AG04449 (cell line): ENCODE measurements at regions of chr1 and their contacts with region 1.

Region 1: DNA sequence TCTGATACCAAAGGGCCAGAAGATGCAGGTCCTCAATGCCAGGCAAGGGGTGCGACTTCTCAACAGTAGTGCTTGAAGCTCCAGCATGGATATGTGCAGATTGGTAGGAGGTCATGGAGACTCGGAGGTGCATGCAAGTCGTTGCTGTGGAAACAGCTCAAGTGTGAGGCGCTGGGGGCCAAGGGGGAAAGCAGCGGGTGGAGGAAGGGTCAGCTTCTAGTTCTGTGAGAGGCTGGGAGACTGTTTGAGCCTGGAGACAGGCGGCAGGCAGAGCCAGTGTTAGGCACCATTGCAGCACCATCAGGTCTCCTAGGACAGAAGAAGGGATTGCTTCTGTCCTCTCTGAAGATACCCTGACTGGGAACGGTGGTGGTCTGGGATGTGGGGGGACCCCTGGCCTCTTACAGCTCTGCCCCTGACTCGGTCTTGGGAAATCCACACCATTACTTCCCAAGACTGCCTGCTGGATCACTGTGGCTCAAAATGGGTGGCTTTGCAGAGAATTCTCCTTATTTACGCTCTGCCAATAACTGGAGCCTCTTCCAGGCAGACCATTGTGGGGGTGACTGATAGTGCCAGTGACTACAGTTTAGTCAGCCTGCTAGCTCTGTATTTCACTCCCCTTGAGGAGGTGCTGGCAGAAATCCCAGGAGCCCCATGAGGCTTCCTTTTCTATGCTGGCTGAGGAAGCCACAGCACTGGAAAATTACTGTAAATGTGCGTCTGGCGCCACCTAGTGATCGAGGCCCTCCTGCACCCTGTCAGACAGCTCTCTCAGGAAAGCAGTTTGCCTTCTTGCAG is 46.3 kb upstream of the VANGL1 start:
- DNase-seq: peak; percentile 92
- H3K4me3 ChIP-seq: no peak overlapping the region
- CTCF ChIP-seq: peak; percentile 89

Region 2: DNA sequence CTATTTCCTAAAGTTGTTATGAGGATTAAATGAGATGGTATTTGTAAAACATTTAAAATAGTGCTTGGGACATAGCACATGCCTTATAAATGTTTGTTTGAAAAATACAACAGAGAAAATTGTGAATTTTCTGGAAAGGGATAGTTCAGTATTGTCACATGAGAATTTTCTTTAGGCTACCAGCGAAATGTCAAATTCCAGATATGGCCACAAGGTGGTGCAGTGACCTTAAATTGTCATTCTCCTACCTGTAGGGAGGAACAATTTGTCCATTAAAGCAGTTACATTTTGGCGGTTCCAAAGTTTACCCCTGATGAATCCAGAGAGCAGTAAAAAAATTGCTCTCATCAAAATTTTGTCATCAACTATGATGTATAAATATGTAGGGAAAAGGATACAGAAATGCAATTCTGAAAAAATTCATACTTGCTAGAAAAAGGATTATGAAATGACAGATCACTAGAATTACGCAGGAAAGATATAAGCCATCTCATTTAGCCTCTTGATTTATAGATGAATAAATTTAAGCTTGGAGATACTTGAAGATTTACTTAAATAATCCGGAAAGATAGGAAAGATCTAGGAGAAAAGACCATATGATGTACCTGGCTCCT is 616.1 kb before region 1 on chr1:
- CTCF ChIA-PET with region 1: interaction called, 17 read pairs
- POLR2A ChIA-PET with region 1: no interaction called
- DNase-seq: peak; percentile 17
- H3K4me3 ChIP-seq: no peak overlapping the region
- CTCF ChIP-seq: peak; percentile 64

Region 3: GRCh38 chr1:115138968-115139367 is 456.5 kb before region 1 on chr1:
- CTCF ChIA-PET with region 1: interaction called, 182 read pairs
- POLR2A ChIA-PET with region 1: interaction called, 3 read pairs
- DNase-seq: peak; percentile 87
- H3K4me3 ChIP-seq: no peak overlapping the region
- CTCF ChIP-seq: peak; percentile 88

Region 4: GRCh38 chr1:115296981-115297380 is 298.5 kb before region 1 on chr1:
- CTCF ChIA-PET with region 1: interaction called, 25 read pairs
- POLR2A ChIA-PET with region 1: interaction called, 3 read pairs
- DNase-seq: no peak
- H3K4me3 ChIP-seq: no peak overlapping the region
- CTCF ChIP-seq: no peak

Region 5: GRCh38 chr1:115337633-115338456 is 257.6 kb before region 1 on chr1 and contains the start of gene NGF:
- CTCF ChIA-PET with region 1: interaction called, 11 read pairs
- POLR2A ChIA-PET with region 1: interaction called, 6 read pairs
- DNase-seq: no peak
- H3K4me3 ChIP-seq: peak within 1 kb of the TSS; percentile 99
- CTCF ChIP-seq: no peak

Region 6: DNA sequence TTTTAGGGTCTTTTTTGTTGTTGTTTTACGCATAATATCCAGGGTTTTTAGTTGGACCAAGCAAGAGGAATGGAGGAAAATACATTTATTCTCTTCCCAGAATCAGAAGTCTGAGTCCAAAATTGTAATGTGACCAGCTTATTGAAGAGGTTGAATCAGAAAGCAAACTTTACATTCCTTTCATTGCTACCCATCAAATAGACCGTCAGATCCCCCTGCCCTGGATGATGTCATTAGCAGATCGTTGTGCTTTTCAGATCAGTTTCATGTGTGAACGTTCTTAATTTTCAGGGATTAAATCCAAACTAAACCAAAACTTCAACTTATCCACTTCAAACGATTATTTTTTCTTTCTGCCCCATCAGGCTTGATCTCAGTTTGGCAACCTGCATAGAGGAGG is 171.7 kb before region 1 on chr1:
- CTCF ChIA-PET with region 1: no interaction called
- POLR2A ChIA-PET with region 1: no interaction called
- DNase-seq: no peak
- H3K4me3 ChIP-seq: no peak overlapping the region
- CTCF ChIP-seq: no peak

Region 7: DNA sequence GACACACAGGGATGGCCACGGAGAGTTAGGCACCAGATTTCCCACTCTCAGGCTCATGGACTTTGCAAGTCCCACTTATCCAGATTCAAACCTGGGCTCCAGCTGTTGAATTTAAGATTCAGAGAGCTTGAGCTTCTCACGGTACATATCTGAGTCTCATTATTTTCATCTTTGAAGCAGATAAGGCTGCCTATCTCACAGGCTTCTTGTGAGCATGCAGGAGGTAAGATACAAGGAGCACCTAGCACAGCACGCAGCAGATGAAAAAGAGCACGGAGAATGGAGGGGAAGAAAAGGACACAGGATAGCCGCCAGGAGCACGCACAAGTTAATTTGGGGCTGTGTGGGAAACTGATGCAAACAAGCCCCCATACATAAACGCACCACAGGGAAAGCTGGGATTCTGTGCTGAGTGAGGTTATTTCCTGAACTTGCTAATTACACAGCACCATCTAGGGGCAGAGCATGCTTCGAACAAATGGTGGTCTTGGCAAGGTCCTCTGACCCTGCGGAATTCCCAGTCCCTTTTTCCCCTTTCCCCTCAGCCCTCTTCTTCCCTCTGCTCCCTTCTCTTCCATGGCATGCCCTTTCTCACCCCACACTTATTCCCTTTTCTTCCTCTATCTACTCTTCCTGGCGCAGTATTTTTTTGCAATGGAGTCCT is 88.4 kb before region 1 on chr1:
- CTCF ChIA-PET with region 1: interaction called, 13 read pairs
- POLR2A ChIA-PET with region 1: no interaction called
- DNase-seq: no peak
- H3K4me3 ChIP-seq: peak overlapping the region; percentile 16
- CTCF ChIP-seq: peak; percentile 70

Region 8: DNA sequence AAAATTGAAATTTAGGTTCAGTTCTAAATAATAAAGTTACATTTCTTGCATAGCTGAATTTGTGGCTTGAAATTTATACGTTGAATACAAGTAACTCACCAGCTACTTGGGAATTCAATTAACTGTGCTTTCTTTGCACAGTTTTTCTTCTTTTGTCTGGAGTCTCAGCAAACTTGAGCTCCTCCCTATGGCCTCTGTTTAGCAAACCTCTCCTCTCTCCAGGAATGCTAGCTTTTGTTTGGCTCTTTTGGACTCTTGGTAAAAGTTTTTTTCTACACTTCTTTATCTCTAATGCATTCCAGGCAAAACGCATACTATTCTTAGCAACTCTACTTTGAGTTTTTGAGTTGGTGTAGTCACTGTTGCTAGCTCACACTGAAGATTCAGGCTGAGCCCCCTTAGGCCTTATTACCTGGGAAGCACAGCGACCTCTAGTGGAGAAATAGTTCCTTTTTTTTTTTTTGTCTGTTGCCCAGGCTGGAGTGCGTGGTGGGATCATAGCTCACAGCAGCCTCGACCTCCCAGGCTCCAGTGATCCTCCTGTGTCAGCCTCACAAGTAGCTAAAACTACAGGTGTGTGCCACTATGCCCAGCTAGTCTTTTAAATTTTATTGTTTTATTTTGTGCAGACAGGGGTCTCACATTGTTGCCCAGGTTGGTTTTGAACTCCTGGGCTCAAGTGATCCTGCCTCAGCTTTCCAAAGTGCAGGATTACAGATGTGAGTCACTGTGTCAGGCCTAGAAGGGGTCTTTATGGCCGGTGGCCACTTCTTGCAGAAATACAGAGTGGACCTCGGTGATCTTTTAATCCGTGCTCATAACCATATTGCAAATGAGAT is 111.3 kb after region 1 on chr1:
- CTCF ChIA-PET with region 1: interaction called, 34 read pairs
- POLR2A ChIA-PET with region 1: no interaction called
- DNase-seq: peak; percentile 24
- H3K4me3 ChIP-seq: no peak overlapping the region
- CTCF ChIP-seq: peak; percentile 55